Ascending aorta (tissue), 2 donors: ENCODE measurements at regions of chr9 and their contacts with region 1.

Region 1: GRCh38 chr9:107587191-107587963 is 97.8 kb upstream of the KLF4 start:
- DNase-seq: peak in 1 of 2 donors; percentile 77
- H3K4me3 ChIP-seq: peak overlapping the region in 1 of 2 donors; percentile 44
- H3K27ac ChIP-seq: peak overlapping the region; percentile 19 to 58
- H3K4me1 ChIP-seq: no peaks in the 10 kb centered on the region
- H3K27me3 ChIP-seq: no peaks in the 10 kb centered on the region
- CTCF ChIP-seq: no peak

Region 2: GRCh38 chr9:107504569-107505377 is 82.6 kb before region 1 on chr9:
- intact Hi-C with region 1: loop called (anchors 10 kb)
- DNase-seq: peak in 1 of 2 donors; percentile 81
- H3K4me3 ChIP-seq: no peak overlapping the region
- H3K27ac ChIP-seq: peak overlapping the region; percentile 73 to 83
- H3K4me1 ChIP-seq: peaks cover 0 to 10% of the 10 kb centered on the region in 2 donors
- H3K27me3 ChIP-seq: no peaks in the 10 kb centered on the region
- CTCF ChIP-seq: no peak

Region 3: GRCh38 chr9:107548048-107548800 is 39.2 kb before region 1 on chr9:
- intact Hi-C with region 1: no loop called
- DNase-seq: peak in 1 of 2 donors; percentile 69
- H3K4me3 ChIP-seq: peak overlapping the region in 1 of 2 donors; percentile 48
- H3K27ac ChIP-seq: peak overlapping the region; percentile 34 to 56
- H3K4me1 ChIP-seq: peaks cover 0 to 3% of the 10 kb centered on the region in 2 donors
- H3K27me3 ChIP-seq: no peaks in the 10 kb centered on the region
- CTCF ChIP-seq: no peak

Region 4: GRCh38 chr9:107566611-107567061 is 20.7 kb before region 1 on chr9:
- intact Hi-C with region 1: no loop called
- DNase-seq: no peak
- H3K4me3 ChIP-seq: no peak overlapping the region
- H3K27ac ChIP-seq: no peak overlapping the region
- H3K4me1 ChIP-seq: no peaks in the 10 kb centered on the region
- H3K27me3 ChIP-seq: no peaks in the 10 kb centered on the region
- CTCF ChIP-seq: no peak